ENCODE measurements at regions of chr11 and their contacts with region 1.

Region 1: DNA sequence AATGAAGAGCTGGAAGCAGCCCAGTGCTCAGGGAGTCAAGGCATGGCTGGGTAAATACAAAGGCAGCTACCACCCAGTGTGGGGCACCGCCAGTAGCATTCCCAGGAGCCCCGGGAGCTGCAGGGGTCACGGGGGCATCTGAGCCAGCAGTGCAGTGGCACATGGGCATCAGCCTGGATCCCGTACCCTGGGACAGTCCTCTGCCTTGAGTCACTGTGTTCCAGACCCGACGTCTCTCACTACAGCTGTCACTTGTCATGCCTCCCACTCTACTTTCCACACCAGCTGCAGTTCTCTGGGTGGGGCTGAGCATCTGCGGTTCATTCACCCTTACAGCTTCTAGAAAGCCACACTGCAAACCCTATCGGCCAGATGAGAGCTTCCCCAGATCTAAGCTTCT is 29.6 kb downstream of the DHCR7 start:
- DNase-seq: no peak
- ATAC-seq: no peak
- H3K4me3 ChIP-seq: no peak overlapping the region
- H3K27ac ChIP-seq: no peak overlapping the region
- H3K4me1 ChIP-seq: no peaks in the 10 kb centered on the region
- H3K27me3 ChIP-seq: no peaks in the 10 kb centered on the region
- CTCF ChIP-seq: no peak
- POLR2A ChIP-seq: no peak

Region 2: DNA sequence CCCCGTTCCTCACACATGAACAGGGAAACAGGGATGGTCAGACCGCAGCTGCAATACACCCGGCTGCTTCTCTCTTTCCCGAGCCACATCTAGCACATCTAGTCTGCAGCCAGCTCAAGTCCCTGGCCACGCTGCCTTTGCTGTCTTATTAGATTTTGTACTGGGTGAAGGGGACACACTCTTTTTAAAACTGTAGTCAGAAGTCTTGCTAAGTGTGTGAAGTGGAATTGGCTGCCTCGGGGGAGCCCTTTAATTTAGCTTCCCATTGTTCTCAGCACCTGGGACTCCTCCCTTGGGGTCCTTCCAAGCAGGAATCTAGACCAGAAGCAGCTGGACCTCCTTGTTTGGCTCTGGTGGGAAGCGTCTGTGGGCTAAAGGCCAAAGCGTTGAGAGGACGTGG is 600.3 kb before region 1 on chr11:
- intact Hi-C with region 1: loop called (anchors 10 kb)
- DNase-seq: no peak
- ATAC-seq: no peak
- H3K4me3 ChIP-seq: no peak overlapping the region
- H3K27ac ChIP-seq: no peak overlapping the region
- H3K4me1 ChIP-seq: no peaks in the 10 kb centered on the region
- H3K27me3 ChIP-seq: no peaks in the 10 kb centered on the region
- CTCF ChIP-seq: no peak
- POLR2A ChIP-seq: no peak

Region 3: DNA sequence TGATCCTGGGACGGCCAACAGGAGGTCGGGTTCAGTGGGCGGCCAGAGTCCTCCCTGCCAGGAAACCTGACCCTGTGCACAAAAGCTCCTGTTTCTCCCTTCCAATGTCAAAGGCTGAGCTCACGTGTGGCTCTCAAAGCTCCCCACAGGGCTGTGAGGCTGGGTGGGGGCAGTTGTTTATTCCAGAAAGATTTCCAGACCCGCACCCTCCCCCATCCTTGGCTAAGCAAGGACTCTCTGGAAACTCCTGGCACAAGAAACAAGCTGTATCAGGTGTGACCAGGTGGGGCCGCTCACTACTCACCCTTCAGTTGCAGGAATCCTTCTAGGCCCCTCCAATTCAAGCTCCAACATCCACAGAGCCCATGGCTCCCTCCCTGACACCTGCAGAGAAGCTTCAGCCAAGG is 298.1 kb before region 1 on chr11:
- intact Hi-C with region 1: no loop called
- DNase-seq: peak; percentile 69 to 81 (median 77)
- ATAC-seq: peak; percentile 84
- H3K4me3 ChIP-seq: no peak overlapping the region
- H3K27ac ChIP-seq: peak overlapping the region in 3 of 4 donors; percentile 38 to 62 (median 47)
- H3K4me1 ChIP-seq: peaks cover 9% of the 10 kb centered on the region
- H3K27me3 ChIP-seq: no peaks in the 10 kb centered on the region
- CTCF ChIP-seq: peak; percentile 35 to 83 (median 75)
- POLR2A ChIP-seq: no peak